ENCODE measurements at regions of chr5 and their contacts with region 1.

Region 1: GRCh38 chr5:112921833-112922817 is at the start of gene REEP5:
- DNase-seq: peak; percentile 67 to 93 (median 84)
- ATAC-seq: peak; percentile 72
- H3K4me3 ChIP-seq: peak within 1 kb of the TSS; percentile 88 to 96
- H3K4me3 Mint-ChIP-seq: peak within 1 kb of the TSS; percentile 79
- H3K27ac ChIP-seq: peak within 1 kb of the TSS; percentile 79 to 89
- H3K27ac Mint-ChIP-seq: peak within 1 kb of the TSS; percentile 95
- H3K4me1 ChIP-seq: peaks cover 51% of the 10 kb centered on the region
- H3K4me1 Mint-ChIP-seq: peaks cover 61% of the 10 kb centered on the region
- H3K27me3 ChIP-seq: no peaks in the 10 kb centered on the region
- H3K27me3 Mint-ChIP-seq: no peaks in the 10 kb centered on the region
- CTCF ChIP-seq: peak; percentile 58
- total RNA-seq, gene REEP5: 20.0 to 24.7 TPM

Region 2: GRCh38 chr5:112551419-112552032 is 370.6 kb before region 1 on chr5:
- CTCF ChIA-PET with region 1: interaction called, 4 read pairs
- POLR2A ChIA-PET with region 1: no interaction called
- intact Hi-C with region 1: loop called in 1 of 2 experiments (anchors 1 kb)
- DNase-seq: peak in 5 of 9 experiments; percentile 25 to 71 (median 32)
- ATAC-seq: peak; percentile 51
- H3K4me3 ChIP-seq: no peak overlapping the region
- H3K4me3 Mint-ChIP-seq: no peak overlapping the region
- H3K27ac ChIP-seq: no peak overlapping the region
- H3K27ac Mint-ChIP-seq: no peak overlapping the region
- H3K4me1 ChIP-seq: no peaks in the 10 kb centered on the region
- H3K4me1 Mint-ChIP-seq: no peaks in the 10 kb centered on the region
- H3K27me3 ChIP-seq: no peaks in the 10 kb centered on the region
- H3K27me3 Mint-ChIP-seq: no peaks in the 10 kb centered on the region
- CTCF ChIP-seq: peak; percentile 76

Region 3: DNA sequence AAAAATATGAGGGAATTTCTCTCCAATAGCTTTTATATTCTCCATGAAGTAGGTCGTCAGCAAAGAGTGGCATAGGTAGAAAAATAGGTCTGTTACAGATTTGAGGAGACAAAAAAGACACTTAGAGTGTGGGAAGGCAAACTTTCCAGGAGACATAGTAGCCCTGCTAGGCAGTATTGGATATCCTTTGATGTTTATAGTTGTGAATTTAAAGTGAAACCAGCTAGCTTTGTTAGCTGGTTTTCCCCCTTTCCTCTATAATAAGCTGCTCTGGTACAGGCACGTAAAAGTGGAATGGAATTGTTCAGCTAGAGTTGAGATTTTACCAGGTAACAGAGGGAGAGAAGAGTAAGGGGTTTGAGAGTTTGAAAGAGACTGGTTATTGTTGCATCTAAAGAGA is 201.5 kb before region 1 on chr5:
- CTCF ChIA-PET with region 1: no interaction called
- POLR2A ChIA-PET with region 1: no interaction called
- intact Hi-C with region 1: no loop called
- DNase-seq: no peak
- ATAC-seq: no peak
- H3K4me3 ChIP-seq: no peak overlapping the region
- H3K4me3 Mint-ChIP-seq: no peak overlapping the region
- H3K27ac ChIP-seq: no peak overlapping the region
- H3K27ac Mint-ChIP-seq: no peak overlapping the region
- H3K4me1 ChIP-seq: no peaks in the 10 kb centered on the region
- H3K4me1 Mint-ChIP-seq: peaks cover 66% of the 10 kb centered on the region
- H3K27me3 ChIP-seq: no peaks in the 10 kb centered on the region
- H3K27me3 Mint-ChIP-seq: no peaks in the 10 kb centered on the region
- CTCF ChIP-seq: no peak

Region 4: GRCh38 chr5:112757468-112758208 is 164.5 kb before region 1 on chr5:
- CTCF ChIA-PET with region 1: interaction called, 5 read pairs
- POLR2A ChIA-PET with region 1: no interaction called
- intact Hi-C with region 1: loop called in 1 of 2 experiments (anchors 5 kb)
- DNase-seq: peak in 3 of 9 experiments; percentile 51 to 76 (median 69)
- ATAC-seq: peak; percentile 84
- H3K4me3 ChIP-seq: no peak overlapping the region
- H3K4me3 Mint-ChIP-seq: no peak overlapping the region
- H3K27ac ChIP-seq: no peak overlapping the region
- H3K27ac Mint-ChIP-seq: peak overlapping the region; percentile 34
- H3K4me1 ChIP-seq: no peaks in the 10 kb centered on the region
- H3K4me1 Mint-ChIP-seq: peaks cover 12% of the 10 kb centered on the region
- H3K27me3 ChIP-seq: no peaks in the 10 kb centered on the region
- H3K27me3 Mint-ChIP-seq: no peaks in the 10 kb centered on the region
- CTCF ChIP-seq: peak; percentile 83

Region 5: DNA sequence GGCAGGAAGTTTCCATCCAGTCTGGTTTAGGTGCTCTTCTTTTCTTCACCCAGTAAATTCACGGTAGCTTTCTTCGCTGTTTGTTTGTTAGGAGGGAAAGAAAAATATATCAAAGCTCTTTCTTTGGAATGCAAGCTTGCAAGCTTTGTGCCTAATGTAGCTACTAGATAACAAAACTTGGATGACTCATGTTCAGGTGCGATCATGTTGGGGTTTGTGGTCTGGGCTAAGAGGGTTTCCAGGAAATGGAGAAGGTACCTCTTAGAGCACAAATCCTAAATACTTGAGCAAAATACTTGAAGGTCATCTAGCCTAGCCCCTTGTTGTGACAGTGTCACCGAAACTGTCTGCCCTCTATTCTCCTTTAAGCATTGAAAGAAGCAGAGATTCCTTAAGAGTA is 43.4 kb before region 1 on chr5:
- CTCF ChIA-PET with region 1: no interaction called
- POLR2A ChIA-PET with region 1: interaction called, 4 read pairs
- intact Hi-C with region 1: loop called (anchors 5 kb)
- DNase-seq: peak in 7 of 9 experiments; percentile 26 to 69 (median 52)
- ATAC-seq: peak; percentile 90
- H3K4me3 ChIP-seq: no peak overlapping the region
- H3K4me3 Mint-ChIP-seq: peak overlapping the region; percentile 19
- H3K27ac ChIP-seq: peak overlapping the region in 1 of 2 experiments; percentile 51
- H3K27ac Mint-ChIP-seq: peak overlapping the region; percentile 69
- H3K4me1 ChIP-seq: peaks cover 16% of the 10 kb centered on the region
- H3K4me1 Mint-ChIP-seq: peaks cover 31% of the 10 kb centered on the region
- H3K27me3 ChIP-seq: no peaks in the 10 kb centered on the region
- H3K27me3 Mint-ChIP-seq: no peaks in the 10 kb centered on the region
- CTCF ChIP-seq: no peak

Region 6: GRCh38 chr5:112958093-112959088 is 36.3 kb after region 1 on chr5:
- CTCF ChIA-PET with region 1: interaction called, 42 read pairs
- POLR2A ChIA-PET with region 1: no interaction called
- intact Hi-C with region 1: no loop called
- DNase-seq: no peak
- ATAC-seq: no peak
- H3K4me3 ChIP-seq: no peak overlapping the region
- H3K4me3 Mint-ChIP-seq: no peak overlapping the region
- H3K27ac ChIP-seq: no peak overlapping the region
- H3K27ac Mint-ChIP-seq: no peak overlapping the region
- H3K4me1 ChIP-seq: no peaks in the 10 kb centered on the region
- H3K4me1 Mint-ChIP-seq: peaks cover 2% of the 10 kb centered on the region
- H3K27me3 ChIP-seq: no peaks in the 10 kb centered on the region
- H3K27me3 Mint-ChIP-seq: peaks cover 2% of the 10 kb centered on the region
- CTCF ChIP-seq: no peak

Region 7: GRCh38 chr5:112976432-112977309 is 54.5 kb after region 1 on chr5 and contains the start of gene DCP2:
- CTCF ChIA-PET with region 1: interaction called, 5 read pairs
- POLR2A ChIA-PET with region 1: interaction called, 25 read pairs
- intact Hi-C with region 1: loop called (anchors 1 to 2 kb)
- DNase-seq: peak; percentile 88 to 99 (median 95)
- ATAC-seq: peak; percentile 96
- H3K4me3 ChIP-seq: peak within 1 kb of the TSS; percentile 57 to 98
- H3K4me3 Mint-ChIP-seq: peak within 1 kb of the TSS; percentile 100
- H3K27ac ChIP-seq: peak within 1 kb of the TSS; percentile 81
- H3K27ac Mint-ChIP-seq: peak within 1 kb of the TSS; percentile 97
- H3K4me1 ChIP-seq: peaks cover 24% of the 10 kb centered on the region
- H3K4me1 Mint-ChIP-seq: peaks cover 43% of the 10 kb centered on the region
- H3K27me3 ChIP-seq: no peaks in the 10 kb centered on the region
- H3K27me3 Mint-ChIP-seq: no peaks in the 10 kb centered on the region
- CTCF ChIP-seq: no peak
- total RNA-seq, gene DCP2: 65.4 to 69.8 TPM

Measured in CD8-positive, alpha-beta T cell (primary cell).